ENCODE measurements at regions of chr6 and their contacts with region 1.

Region 1: DNA sequence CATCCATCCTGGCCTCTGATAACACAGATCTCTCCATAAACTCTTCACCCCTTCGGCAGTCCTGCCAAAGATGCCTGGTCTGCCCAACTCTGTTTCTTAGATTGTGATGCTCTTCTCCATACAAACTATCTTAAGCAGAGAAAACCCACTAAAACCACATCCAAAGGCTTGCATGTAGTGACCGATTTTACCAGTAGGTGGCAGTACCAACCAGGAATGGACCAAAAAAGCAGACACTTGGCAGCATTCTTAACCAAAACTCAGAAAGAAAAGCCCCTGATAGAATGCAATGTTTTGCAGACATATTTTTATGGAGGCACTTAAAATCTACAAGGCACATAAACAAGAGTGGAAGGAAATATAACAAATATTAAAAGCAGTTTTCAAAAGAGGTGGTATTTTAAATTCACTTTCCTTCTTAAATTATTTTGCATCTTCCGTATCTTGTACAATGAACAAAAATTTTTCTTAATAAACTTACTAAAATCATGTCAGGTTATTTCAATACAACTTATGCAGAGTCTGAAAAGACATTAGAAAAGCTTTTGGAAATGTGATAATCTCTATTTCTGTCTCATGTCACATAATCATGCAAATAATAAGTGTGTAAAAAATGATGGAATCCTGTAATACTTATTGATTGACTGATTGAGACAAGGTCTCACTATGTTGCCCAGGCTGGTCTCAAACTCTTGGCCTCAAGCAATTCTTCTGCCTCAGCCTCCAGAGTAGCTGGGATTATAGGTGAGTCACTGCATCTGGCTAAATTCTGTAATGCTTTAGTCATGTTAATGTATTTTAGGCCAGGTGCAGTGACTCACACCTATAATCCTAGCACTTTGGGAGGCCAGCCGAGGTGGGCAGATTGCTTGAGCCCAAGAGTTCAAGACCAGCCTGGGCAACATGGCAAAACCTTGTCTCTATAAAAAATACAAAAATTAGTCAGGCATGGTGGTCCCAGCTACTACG is 29.4 kb downstream of the LRP11 start:
- DNase-seq: peak; percentile 76
- H3K4me3 ChIP-seq: no peak overlapping the region
- H3K27ac ChIP-seq: no peak overlapping the region
- H3K4me1 ChIP-seq: peaks cover 2% of the 10 kb centered on the region
- H3K27me3 ChIP-seq: no peaks in the 10 kb centered on the region
- CTCF ChIP-seq: peak; percentile 91

Region 2: GRCh38 chr6:149863697-149864577 is 29.1 kb after region 1 on chr6 and contains the start of gene LRP11:
- intact Hi-C with region 1: loop called (anchors 2 kb)
- DNase-seq: peak; percentile 92
- H3K4me3 ChIP-seq: peak within 1 kb of the TSS; percentile 64
- H3K27ac ChIP-seq: peak within 1 kb of the TSS; percentile 92
- H3K4me1 ChIP-seq: no peaks in the 10 kb centered on the region
- H3K27me3 ChIP-seq: no peaks in the 10 kb centered on the region
- CTCF ChIP-seq: no peak
- total RNA-seq, gene LRP11: 24.8 to 39.4 TPM

Region 3: DNA sequence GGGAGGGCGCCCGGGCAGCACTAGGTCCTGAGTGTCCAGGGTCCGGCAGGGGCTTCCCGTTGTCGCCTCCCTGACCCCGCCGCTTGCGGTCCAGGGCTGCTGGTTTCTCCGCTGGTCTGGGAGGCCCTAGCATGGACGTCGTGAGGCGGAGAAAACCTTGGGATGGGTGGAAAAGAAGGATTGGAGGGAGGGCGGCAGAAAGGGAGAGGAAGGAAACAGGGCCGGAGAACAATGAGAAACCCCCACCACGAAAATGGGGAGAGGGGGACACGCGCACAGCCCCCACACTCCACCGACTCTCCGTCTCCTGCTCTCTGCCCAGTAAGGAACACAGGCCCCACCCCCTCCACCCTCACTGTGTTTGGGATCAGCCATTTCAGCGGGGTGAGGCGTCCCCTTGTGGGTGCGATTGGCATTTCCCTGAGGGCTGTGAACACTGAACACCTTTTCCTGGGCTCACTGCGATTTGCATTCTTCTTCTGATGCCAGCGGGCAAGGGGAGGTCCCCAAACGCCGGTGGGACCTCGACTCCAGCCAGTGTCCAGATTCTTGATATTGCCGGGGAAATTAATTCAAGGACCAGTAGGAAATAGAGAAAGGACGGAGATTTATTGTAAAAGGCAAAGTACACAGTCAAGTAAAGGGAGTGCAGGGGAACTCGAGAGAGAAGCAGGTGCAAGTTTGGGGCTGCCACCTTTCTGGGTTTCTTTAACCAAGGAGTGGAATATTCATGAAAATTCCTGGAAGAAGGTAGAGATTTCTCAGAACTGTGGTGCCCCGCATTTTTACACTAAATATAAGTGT is 91.4 kb after region 1 on chr6:
- intact Hi-C with region 1: loop called (anchors 2 kb)
- DNase-seq: peak; percentile 97
- H3K4me3 ChIP-seq: peak overlapping the region; percentile 42
- H3K27ac ChIP-seq: no peak overlapping the region
- H3K4me1 ChIP-seq: no peaks in the 10 kb centered on the region
- H3K27me3 ChIP-seq: peaks cover 10% of the 10 kb centered on the region
- CTCF ChIP-seq: peak; percentile 87

Region 4: DNA sequence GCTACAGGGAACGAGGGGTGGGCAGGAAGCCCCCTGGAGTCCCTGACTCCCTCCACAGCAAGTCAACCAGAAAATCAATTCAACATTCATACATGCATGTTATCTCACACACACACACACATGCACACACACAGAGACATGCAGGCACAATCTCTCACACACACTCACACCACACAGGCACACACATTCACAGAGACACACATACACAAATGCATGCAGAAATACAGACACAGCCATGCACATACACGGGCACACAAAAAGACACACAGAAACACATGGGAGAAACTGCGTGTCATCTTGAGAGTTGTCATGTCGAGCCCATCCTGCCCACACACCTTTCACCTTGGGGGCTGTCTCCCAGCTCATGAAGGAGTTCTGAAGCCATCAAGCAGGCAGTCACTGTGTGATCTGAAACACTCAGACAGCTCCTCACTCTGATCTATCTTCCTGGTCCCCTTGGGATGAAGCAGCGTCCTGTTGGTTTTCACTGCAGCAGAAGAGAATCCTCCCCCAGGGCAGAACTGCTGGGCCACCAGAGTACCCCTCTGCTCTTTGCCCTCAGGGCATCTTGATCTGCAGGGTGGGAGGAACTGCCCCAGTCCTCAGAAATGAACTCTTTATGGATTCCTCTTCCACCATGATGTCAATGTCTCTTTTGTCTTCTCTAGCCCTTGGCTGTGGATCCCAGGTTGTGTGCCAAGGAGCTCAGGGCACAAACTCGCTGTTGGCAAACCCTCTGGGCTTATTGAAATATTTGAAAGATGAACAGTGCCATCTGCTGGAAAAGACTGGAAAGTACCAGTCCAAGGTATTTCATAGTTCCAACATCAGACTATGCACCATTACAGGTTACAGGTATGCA is 181.8 kb after region 1 on chr6:
- intact Hi-C with region 1: loop called (anchors 10 kb)
- DNase-seq: peak; percentile 65
- H3K4me3 ChIP-seq: no peak overlapping the region
- H3K27ac ChIP-seq: no peak overlapping the region
- H3K4me1 ChIP-seq: no peaks in the 10 kb centered on the region
- H3K27me3 ChIP-seq: peaks cover 39% of the 10 kb centered on the region
- CTCF ChIP-seq: peak; percentile 53

Measured in colonic mucosa (tissue), 4 donors.